ENCODE measurements at regions of chr13 and their contacts with region 1.

Region 1: DNA sequence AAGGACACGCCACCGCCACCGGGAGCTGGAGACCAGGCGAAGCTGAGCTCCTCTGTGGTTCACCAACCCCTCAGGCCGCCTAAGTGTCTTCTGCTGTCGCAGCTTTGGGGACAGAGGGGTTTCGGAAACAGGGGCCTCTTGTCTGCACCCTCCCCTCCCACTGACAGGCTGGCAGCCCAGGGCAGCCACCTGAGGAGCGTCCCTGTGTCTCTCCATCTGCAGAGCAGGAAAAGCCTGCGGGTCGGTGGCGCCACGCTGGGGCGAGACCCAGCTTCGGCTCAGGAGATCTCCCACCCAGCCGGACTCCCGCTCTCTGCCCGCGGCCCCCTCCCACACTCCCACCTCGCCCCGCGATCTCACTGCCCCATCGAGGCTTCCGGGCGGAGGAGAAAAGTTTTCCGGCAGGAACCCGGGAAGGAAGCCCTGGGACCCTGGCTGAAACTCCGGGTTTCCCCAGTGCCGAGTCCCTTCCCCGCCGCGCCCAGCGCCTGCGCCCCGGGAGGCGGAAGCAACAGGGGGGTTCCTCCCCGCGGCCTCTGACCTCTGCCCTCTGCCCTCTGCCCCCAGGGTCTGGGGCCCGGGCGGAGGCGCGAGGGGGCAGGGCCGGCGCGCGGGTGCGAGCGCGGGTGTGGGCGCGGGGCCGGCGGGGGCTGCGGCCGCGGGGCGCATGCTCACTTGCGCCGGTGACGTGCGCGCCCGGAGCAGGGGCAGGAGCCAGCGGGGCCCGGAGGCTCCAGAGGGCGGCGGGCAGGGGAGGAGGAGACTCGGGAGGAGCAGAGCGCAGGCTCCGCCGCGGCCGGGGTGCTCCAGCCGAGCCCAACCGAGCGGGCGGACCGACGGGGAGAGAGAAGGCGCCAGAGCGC is at the start of gene ATP11A:
- DNase-seq: peak; percentile 72
- ATAC-seq: peak; percentile 74
- H3K4me3 ChIP-seq: peak within 1 kb of the TSS; percentile 88 to 96 (median 90)
- H3K27ac ChIP-seq: peak within 1 kb of the TSS; percentile 84
- H3K4me1 ChIP-seq: peaks cover 52% of the 10 kb centered on the region
- H3K27me3 ChIP-seq: no peaks in the 10 kb centered on the region; a peak in 1 of 5 replicates
- CTCF ChIP-seq: peak; percentile 55
- EP300 ChIP-seq: peak; percentile 8 to 30; a peak in 1 of 4 replicates
- POLR2A ChIP-seq: peak in 1 of 2 experiments; percentile 75; a peak in 2 of 4 replicates
- RAD21 ChIP-seq: no peak; the same call in none of the 2 replicates
- total RNA-seq, gene ATP11A: 18.4 and 18.9 TPM in 2 replicates

Region 2: DNA sequence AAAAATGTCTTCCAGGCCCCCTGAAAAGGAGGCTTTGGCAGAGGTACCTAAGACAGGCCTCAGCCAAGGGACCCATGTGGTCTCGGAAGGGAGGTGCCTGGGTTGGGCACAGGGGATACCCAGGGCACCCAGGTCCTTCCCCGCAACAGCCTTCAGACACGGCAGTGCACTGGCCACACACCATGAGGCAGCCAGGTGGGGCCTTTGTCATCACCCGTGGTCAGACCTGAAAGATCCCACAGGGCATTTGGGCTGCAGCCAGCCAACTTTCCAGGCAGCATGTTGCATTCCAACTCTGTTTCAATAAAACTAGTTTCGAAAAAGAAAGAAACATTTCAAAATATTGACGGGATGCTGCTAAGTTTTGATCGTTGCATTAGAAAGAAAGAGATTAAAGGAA is 96.9 kb before region 1 on chr13:
- CTCF ChIA-PET with region 1: no interaction called
- POLR2A ChIA-PET with region 1: no interaction called
- in situ Hi-C with region 1: no loop called
- intact Hi-C with region 1: no loop called
- DNase-seq: no peak
- ATAC-seq: no peak
- H3K4me3 ChIP-seq: no peak overlapping the region
- H3K27ac ChIP-seq: no peak overlapping the region
- H3K4me1 ChIP-seq: peaks cover 17% of the 10 kb centered on the region
- H3K27me3 ChIP-seq: peaks cover 0 to 6% of the 10 kb centered on the region in 2 experiments; a peak in 1 of 5 replicates
- CTCF ChIP-seq: no peak
- EP300 ChIP-seq: no peak
- POLR2A ChIP-seq: no peak
- RAD21 ChIP-seq: no peak

Region 3: GRCh38 chr13:112643759-112644459 is 45.6 kb before region 1 on chr13:
- CTCF ChIA-PET with region 1: no interaction called
- POLR2A ChIA-PET with region 1: no interaction called
- in situ Hi-C with region 1: no loop called
- intact Hi-C with region 1: loop called (anchors 5 kb)
- DNase-seq: peak; percentile 13
- ATAC-seq: peak; percentile 58
- H3K4me3 ChIP-seq: no peak overlapping the region
- H3K27ac ChIP-seq: no peak overlapping the region
- H3K4me1 ChIP-seq: peaks cover 7% of the 10 kb centered on the region
- H3K27me3 ChIP-seq: peaks cover 3 to 29% of the 10 kb centered on the region in 2 experiments; a peak in 4 of 5 replicates
- CTCF ChIP-seq: no peak
- EP300 ChIP-seq: no peak
- POLR2A ChIP-seq: no peak
- RAD21 ChIP-seq: no peak

Region 4: GRCh38 chr13:112722433-112723250 is 33.1 kb after region 1 on chr13:
- CTCF ChIA-PET with region 1: no interaction called
- POLR2A ChIA-PET with region 1: interaction called, 5 read pairs
- in situ Hi-C with region 1: no loop called
- intact Hi-C with region 1: loop called (anchors 2 kb)
- DNase-seq: peak; percentile 78
- ATAC-seq: peak; percentile 51
- H3K4me3 ChIP-seq: peak overlapping the region; percentile 32 to 57 (median 44)
- H3K27ac ChIP-seq: peak overlapping the region; percentile 90
- H3K4me1 ChIP-seq: peaks cover 90% of the 10 kb centered on the region
- H3K27me3 ChIP-seq: no peaks in the 10 kb centered on the region
- CTCF ChIP-seq: no peak
- EP300 ChIP-seq: no peak; a peak in 1 of 4 replicates
- POLR2A ChIP-seq: no peak; a peak in 1 of 4 replicates
- RAD21 ChIP-seq: no peak

Region 5: GRCh38 chr13:112756967-112757758 is 67.6 kb after region 1 on chr13:
- CTCF ChIA-PET with region 1: no interaction called
- POLR2A ChIA-PET with region 1: interaction called, 6 read pairs
- in situ Hi-C with region 1: no loop called
- intact Hi-C with region 1: loop called (anchors 2 kb)
- DNase-seq: peak; percentile 99
- ATAC-seq: peak; percentile 96
- H3K4me3 ChIP-seq: peak overlapping the region; percentile 7 to 53 (median 14); a peak in 3 of 6 replicates
- H3K27ac ChIP-seq: peak overlapping the region; percentile 91
- H3K4me1 ChIP-seq: peaks cover 75% of the 10 kb centered on the region
- H3K27me3 ChIP-seq: no peaks in the 10 kb centered on the region
- CTCF ChIP-seq: no peak
- EP300 ChIP-seq: peak; percentile 41 to 95; a peak in 3 of 4 replicates
- POLR2A ChIP-seq: no peak; a peak in 1 of 4 replicates
- RAD21 ChIP-seq: peak; percentile 18; the same call in 1 of the 2 replicates

Region 6: DNA sequence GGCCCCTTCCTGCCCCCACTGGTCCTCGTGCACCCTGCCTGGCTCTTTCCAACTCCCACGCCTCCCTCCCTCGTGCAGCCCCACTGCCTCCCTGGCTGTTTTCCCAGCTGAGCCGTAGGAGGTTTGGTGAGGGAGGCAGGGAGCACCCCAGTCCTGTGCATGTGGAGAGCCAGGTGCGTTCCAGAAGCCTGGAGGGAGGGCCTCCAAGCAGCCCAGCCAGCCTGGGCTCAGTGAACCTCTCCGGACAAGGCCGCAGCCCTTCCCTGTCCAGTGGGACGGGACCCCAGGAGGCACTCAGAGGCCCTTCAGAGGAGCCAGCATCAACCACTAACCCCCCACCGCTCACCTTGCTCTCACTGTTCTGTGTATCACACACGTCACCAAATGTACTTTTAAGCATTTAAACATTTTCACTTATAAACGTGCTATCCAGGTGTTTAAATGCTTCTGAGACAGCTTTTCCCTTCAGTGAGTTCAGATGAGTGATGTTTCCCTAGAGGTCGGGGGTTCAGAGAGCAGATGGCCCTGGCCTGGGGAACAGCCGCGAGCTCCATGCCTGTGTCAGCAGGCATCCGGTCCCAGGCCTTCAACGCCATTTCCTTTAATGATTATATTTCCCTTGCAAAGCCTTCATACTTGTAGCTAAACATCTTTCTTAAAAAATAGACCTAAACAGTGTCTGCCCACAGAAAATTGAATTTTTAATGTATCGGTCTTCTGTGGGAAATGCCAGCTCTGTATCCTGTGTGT is 122.9 kb after region 1 on chr13:
- CTCF ChIA-PET with region 1: no interaction called
- POLR2A ChIA-PET with region 1: no interaction called
- in situ Hi-C with region 1: no loop called
- intact Hi-C with region 1: no loop called
- DNase-seq: no peak
- ATAC-seq: no peak
- H3K4me3 ChIP-seq: no peak overlapping the region
- H3K27ac ChIP-seq: no peak overlapping the region
- H3K4me1 ChIP-seq: no peaks in the 10 kb centered on the region
- H3K27me3 ChIP-seq: no peaks in the 10 kb centered on the region
- CTCF ChIP-seq: no peak
- EP300 ChIP-seq: no peak
- POLR2A ChIP-seq: no peak
- RAD21 ChIP-seq: no peak

Region 7: DNA sequence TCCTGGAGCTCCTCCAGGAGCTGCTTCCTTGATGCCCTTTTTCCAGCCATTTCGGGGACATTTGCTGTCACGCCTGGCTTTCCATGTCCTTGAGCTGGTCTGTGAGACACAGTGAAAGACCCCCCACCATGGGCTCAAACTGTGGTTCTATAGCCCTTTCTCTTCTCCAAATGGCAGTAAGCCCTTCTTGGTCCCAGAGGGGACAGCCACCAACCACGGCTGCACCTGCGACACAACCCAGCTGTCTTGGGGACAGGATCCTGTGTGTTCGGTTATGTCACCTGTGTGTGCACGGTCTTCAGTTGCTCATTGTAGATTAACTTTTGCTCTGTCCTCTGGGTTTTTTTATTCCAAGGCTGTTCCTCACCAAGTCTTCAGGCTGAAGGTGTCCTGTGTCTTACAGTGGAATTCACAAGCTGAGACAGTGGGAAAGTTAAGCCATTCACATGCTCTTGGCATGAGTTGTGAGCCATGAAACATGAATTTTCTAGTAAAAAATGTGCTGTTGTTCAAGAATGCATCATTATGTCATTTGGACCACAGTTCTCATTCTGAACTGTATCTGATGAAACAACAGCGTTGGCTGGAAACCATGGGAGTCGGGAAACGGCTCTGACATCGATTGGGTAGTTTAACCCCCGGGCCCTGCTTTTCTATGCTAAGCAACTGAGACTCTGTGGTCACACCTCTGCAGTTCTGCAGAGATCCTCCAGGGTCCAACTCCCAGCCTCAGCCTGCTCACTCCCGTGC is 150.0 kb after region 1 on chr13:
- CTCF ChIA-PET with region 1: no interaction called
- POLR2A ChIA-PET with region 1: no interaction called
- in situ Hi-C with region 1: no loop called
- intact Hi-C with region 1: no loop called
- DNase-seq: no peak
- ATAC-seq: peak; percentile 39; the same call in 2 of the 3 replicates
- H3K4me3 ChIP-seq: no peak overlapping the region
- H3K27ac ChIP-seq: no peak overlapping the region
- H3K4me1 ChIP-seq: no peaks in the 10 kb centered on the region
- H3K27me3 ChIP-seq: no peaks in the 10 kb centered on the region
- CTCF ChIP-seq: no peak
- EP300 ChIP-seq: no peak
- POLR2A ChIP-seq: no peak
- RAD21 ChIP-seq: no peak

Region 8: GRCh38 chr13:113145911-113146598 is 456.5 kb after region 1 on chr13:
- CTCF ChIA-PET with region 1: no interaction called
- POLR2A ChIA-PET with region 1: no interaction called
- in situ Hi-C with region 1: no loop called
- intact Hi-C with region 1: loop called (anchors 5 kb)
- DNase-seq: no peak
- ATAC-seq: no peak
- H3K4me3 ChIP-seq: no peak overlapping the region
- H3K27ac ChIP-seq: no peak overlapping the region
- H3K4me1 ChIP-seq: peaks cover 31% of the 10 kb centered on the region
- H3K27me3 ChIP-seq: no peaks in the 10 kb centered on the region
- CTCF ChIP-seq: no peak
- EP300 ChIP-seq: no peak
- POLR2A ChIP-seq: no peak
- RAD21 ChIP-seq: no peak

Measured in HepG2 (cell line).